ENCODE measurements at regions of chr1 and their contacts with region 1.

Region 1: DNA sequence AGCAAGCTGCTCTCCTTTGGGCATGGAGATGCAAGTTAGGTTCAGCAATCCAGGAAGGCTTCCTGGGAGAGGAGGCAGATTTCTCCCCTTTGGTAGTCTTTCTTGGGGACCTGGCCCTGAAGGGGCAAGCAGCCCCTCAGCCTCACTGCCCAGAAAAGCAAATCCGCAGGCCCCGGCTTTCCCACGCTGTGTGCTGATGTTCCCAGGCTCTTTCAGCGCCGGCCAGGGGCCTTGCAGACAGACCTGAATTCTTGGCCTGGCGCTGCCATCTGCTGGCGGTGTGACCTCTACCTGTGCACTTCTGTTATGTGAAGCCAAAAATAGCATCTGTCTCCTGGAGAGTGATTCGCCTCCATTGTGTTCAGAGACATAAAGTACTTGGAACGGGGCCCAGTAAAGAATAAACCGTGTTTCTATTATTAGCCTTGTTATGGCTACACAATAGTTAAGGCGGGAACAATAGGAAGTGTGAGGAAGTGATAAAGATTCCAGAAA is 64.8 kb downstream of the ALPL start:
- DNase-seq: peak; percentile 84 to 90
- ATAC-seq: peak; percentile 88 to 93 (median 92)
- H3K4me3 ChIP-seq: peak overlapping the region in 3 of 10 donors; percentile 13 to 21 (median 17)
- H3K27ac ChIP-seq: peak overlapping the region in 9 of 10 donors; percentile 68 to 92 (median 83)
- H3K4me1 ChIP-seq: peaks cover 13 to 27% (median 25%) of the 10 kb centered on the region in 9 donors
- H3K27me3 ChIP-seq: peaks cover 0 to 14% (median 0%) of the 10 kb centered on the region in 7 donors
- CTCF ChIP-seq: peak; percentile 44 to 82 (median 68)

Region 2: DNA sequence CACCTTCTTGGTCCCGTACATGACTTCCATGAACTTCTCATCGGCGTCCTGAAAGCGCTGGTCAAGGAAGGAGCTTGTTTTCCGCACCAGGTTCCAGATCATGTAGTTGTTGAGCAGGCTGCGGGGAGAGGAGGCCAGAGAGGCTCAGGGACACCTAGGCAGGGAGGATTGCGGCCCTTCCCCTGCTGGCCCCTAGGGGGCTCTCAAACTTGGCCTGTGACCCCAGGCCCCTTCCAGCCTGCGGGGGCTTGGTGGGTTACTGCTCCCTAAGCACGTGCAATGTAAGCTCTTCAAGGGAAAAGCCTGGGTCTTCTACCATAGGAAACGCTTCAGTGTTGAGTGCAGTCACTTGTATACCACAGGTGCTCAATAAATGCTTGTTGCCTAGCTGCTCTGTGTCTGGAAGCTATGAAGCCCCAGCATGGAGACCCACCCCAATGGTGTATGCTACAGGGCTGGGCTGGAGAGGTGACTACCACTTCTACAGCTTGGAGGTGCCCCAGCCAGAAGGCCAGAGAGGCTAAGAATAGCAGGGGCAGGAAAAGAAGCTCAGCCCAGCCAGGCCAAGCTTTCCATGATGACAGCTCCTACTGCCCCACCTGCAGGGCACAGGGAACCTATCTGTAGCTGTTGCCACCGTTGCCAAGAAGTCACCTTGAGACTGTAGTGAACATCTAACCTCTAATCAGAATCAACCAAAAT is 328.9 kb before region 1 on chr1:
- intact Hi-C with region 1: loop called in 2 of 10 experiments (anchors 10 kb)
- DNase-seq: no peak
- ATAC-seq: no peak
- H3K4me3 ChIP-seq: no peak overlapping the region
- H3K27ac ChIP-seq: no peak overlapping the region
- H3K4me1 ChIP-seq: no peaks in the 10 kb centered on the region
- H3K27me3 ChIP-seq: no peaks in the 10 kb centered on the region
- CTCF ChIP-seq: peak in 7 of 9 donors; percentile 13 to 46 (median 25)

Region 3: DNA sequence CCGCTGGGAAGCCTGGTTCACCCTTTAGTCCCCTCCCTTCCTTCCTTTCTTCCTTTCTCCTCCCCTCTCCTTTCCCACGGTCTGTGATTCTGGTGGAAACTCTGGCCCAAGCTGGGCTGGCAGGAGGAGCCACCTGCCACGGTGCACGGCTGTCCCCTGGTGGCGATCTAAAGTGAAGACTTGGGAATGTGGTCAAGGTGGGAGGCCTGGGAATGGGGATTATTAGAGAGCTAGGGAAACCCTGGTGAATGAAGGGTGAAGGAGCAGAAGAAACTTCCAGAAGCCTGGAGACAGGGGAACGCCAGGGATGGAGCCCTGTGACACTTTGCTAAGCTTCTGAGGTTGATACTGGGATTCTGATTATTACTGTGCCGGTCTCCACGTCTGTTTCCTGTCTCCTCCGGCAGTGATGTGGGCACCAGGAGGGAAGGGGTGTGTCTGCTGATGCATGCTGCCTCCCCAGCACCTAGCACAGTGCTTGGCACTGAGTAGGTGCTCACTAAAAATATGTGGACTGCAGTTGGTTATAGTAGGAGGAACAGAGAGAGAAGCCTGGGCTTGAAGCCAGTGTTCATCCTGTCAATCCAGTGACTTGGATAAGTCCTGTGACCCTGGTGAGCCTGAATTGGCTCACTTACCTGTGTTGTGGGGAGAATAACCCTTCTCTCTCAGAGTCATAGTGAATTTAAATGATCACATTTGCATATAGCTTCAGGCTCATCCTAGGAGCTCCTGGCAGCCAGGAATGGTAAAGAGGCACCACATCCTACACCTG is 205.3 kb before region 1 on chr1:
- intact Hi-C with region 1: loop called in 8 of 10 experiments (anchors 1 to 10 kb)
- DNase-seq: peak; percentile 80 to 83
- ATAC-seq: peak; percentile 90 to 97 (median 94)
- H3K4me3 ChIP-seq: peak overlapping the region in 1 of 10 donors; percentile 7
- H3K27ac ChIP-seq: no peak overlapping the region
- H3K4me1 ChIP-seq: peaks cover 0 to 12% (median 3%) of the 10 kb centered on the region in 9 donors
- H3K27me3 ChIP-seq: no peaks in the 10 kb centered on the region
- CTCF ChIP-seq: peak; percentile 94 to 100 (median 99)

Region 4: GRCh38 chr1:21508580-21509350 is 65.3 kb before region 1 on chr1:
- intact Hi-C with region 1: loop called in 9 of 10 experiments (anchors 1 to 5 kb)
- DNase-seq: peak; percentile 68 to 77
- ATAC-seq: peak; percentile 78 to 89 (median 85)
- H3K4me3 ChIP-seq: peak overlapping the region in 9 of 10 donors; percentile 29 to 60 (median 52)
- H3K27ac ChIP-seq: peak overlapping the region in 3 of 10 donors; percentile 17 to 70 (median 47)
- H3K4me1 ChIP-seq: peaks cover 10 to 43% (median 23%) of the 10 kb centered on the region in 9 donors
- H3K27me3 ChIP-seq: peaks cover 0 to 49% (median 20%) of the 10 kb centered on the region in 7 donors
- CTCF ChIP-seq: peak; percentile 47 to 73 (median 64)

Region 5: GRCh38 chr1:21659099-21659923 is 85.3 kb after region 1 on chr1:
- intact Hi-C with region 1: loop called in 5 of 10 experiments (anchors 2 to 10 kb)
- DNase-seq: peak; percentile 67 to 75
- ATAC-seq: peak; percentile 77 to 90 (median 82)
- H3K4me3 ChIP-seq: peak overlapping the region in 3 of 10 donors; percentile 8 to 35 (median 31)
- H3K27ac ChIP-seq: no peak overlapping the region
- H3K4me1 ChIP-seq: peaks cover 0 to 20% (median 5%) of the 10 kb centered on the region in 9 donors
- H3K27me3 ChIP-seq: peaks cover 0 to 20% (median 0%) of the 10 kb centered on the region in 7 donors
- CTCF ChIP-seq: peak; percentile 93 to 98 (median 95)

Measured in heart right ventricle (tissue), 16 donors.